Activated CD8-positive, alpha-beta T cell treated with anti-CD3 and anti-CD28 coated beads, Interleukin-2, amount 10 ng/mL, durations not matched to agents 7 days and 5 days (primary cell): ENCODE measurements at regions of chr7 and their contacts with region 1.

Region 1: DNA sequence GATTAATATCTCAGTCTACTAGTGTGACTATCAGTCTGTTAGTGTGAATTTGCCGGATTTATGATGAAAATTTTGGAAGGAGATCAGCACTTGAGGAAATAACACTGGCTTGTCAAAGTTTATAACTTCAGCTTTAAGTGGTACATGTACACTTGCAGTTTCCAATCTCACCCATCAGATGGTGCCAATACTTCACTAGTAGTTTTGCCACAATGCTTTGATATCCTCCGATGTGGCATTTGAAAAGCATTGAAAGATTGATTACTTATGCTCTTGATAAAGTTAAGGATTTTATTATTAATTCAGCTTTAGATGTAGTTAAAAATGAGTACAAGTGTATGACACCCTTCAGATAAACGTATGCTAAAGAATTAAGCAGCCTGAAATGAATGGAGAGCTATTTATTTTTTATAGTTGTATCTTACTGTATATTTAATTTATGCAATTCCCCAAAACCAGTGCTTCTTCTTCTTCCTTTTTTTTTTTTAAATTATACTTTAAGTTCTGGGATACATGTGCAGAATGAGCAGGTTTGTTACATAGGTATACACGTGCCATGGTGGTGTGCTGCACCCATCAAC is 98.2 kb downstream of the ANLN start:
- DNase-seq: peak; percentile 68
- ATAC-seq: peak; percentile 70
- H3K4me3 Mint-ChIP-seq: no peak overlapping the region
- H3K27ac Mint-ChIP-seq: no peak overlapping the region
- H3K4me1 Mint-ChIP-seq: peaks cover 3% of the 10 kb centered on the region
- H3K27me3 Mint-ChIP-seq: peaks cover 8% of the 10 kb centered on the region

Region 2: GRCh38 chr7:36303202-36304098 is 184.4 kb before region 1 on chr7:
- CTCF ChIA-PET with region 1: no interaction called
- POLR2A ChIA-PET with region 1: no interaction called
- DNase-seq: no peak
- ATAC-seq: no peak
- H3K4me3 Mint-ChIP-seq: no peak overlapping the region
- H3K27ac Mint-ChIP-seq: no peak overlapping the region
- H3K4me1 Mint-ChIP-seq: no peaks in the 10 kb centered on the region
- H3K27me3 Mint-ChIP-seq: no peaks in the 10 kb centered on the region

Region 3: GRCh38 chr7:36430186-36430585 is 57.7 kb before region 1 on chr7:
- CTCF ChIA-PET with region 1: no interaction called
- POLR2A ChIA-PET with region 1: no interaction called
- DNase-seq: no peak
- ATAC-seq: no peak
- H3K4me3 Mint-ChIP-seq: no peak overlapping the region
- H3K27ac Mint-ChIP-seq: no peak overlapping the region
- H3K4me1 Mint-ChIP-seq: no peaks in the 10 kb centered on the region
- H3K27me3 Mint-ChIP-seq: no peaks in the 10 kb centered on the region

Region 4: GRCh38 chr7:36473454-36474282 is 14.2 kb before region 1 on chr7:
- CTCF ChIA-PET with region 1: interaction called, 12 read pairs
- POLR2A ChIA-PET with region 1: no interaction called
- DNase-seq: peak; percentile 56
- ATAC-seq: peak; percentile 38
- H3K4me3 Mint-ChIP-seq: no peak overlapping the region
- H3K27ac Mint-ChIP-seq: peak overlapping the region; percentile 50
- H3K4me1 Mint-ChIP-seq: peaks cover 27% of the 10 kb centered on the region
- H3K27me3 Mint-ChIP-seq: no peaks in the 10 kb centered on the region

Region 5: DNA sequence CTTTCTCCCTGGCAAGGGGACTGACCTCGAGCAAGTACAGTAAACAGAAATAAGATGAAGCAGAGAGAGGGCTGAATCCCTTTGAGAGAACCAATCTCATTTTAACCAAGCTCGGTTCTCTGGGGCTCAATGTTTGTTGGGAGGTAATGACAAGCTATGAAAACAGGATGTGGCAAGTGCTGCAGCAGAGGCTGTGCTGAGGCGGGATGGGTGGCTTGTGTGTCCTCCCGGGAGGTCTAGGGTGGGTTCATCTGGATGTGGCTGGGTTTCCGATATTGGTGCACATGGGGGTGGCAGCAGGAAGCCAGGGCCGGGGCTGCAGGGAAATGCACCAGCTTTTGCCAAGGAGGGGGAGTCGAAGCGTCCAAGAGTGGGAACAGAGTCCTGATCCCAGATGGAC is 152.0 kb after region 1 on chr7:
- CTCF ChIA-PET with region 1: interaction called, 11 read pairs
- POLR2A ChIA-PET with region 1: no interaction called
- DNase-seq: peak; percentile 85
- ATAC-seq: peak; percentile 91
- H3K4me3 Mint-ChIP-seq: peak overlapping the region; percentile 66
- H3K27ac Mint-ChIP-seq: peak overlapping the region; percentile 97
- H3K4me1 Mint-ChIP-seq: peaks cover 70% of the 10 kb centered on the region
- H3K27me3 Mint-ChIP-seq: no peaks in the 10 kb centered on the region

Region 6: DNA sequence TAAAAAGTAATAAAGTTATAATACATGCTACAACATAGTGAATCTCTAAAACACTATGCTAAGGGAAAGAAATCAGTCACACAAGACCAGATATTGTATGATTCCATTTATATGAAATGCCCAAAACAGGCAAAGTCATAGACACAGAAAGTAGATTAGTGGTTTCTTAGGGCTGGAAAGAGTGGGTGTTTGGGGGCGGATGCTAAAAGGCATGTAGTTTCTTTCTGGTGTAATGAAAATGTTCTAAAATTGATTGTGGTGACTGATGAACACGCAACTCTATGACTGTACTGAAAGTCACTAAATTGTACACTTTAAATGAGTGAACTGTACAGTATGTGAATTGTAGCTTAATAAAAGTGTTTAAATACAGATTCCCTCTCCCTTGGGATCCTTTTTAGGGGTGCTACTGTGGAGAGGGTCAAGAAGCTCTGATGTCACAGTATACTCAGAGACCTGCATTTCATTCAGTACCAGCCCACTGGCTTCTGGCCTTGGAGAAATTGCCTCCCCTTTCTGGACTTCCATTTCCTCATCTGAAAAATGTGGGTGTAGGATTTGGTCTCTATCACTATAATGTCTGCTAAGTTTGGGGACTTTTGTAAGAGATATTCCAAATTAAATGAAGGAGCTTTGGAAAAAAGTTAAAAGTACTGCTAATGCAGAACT is 190.1 kb after region 1 on chr7:
- CTCF ChIA-PET with region 1: interaction called, 15 read pairs
- POLR2A ChIA-PET with region 1: no interaction called
- DNase-seq: peak; percentile 45
- ATAC-seq: peak; percentile 52
- H3K4me3 Mint-ChIP-seq: peak overlapping the region; percentile 51
- H3K27ac Mint-ChIP-seq: peak overlapping the region; percentile 89
- H3K4me1 Mint-ChIP-seq: peaks cover 53% of the 10 kb centered on the region
- H3K27me3 Mint-ChIP-seq: no peaks in the 10 kb centered on the region

Region 7: DNA sequence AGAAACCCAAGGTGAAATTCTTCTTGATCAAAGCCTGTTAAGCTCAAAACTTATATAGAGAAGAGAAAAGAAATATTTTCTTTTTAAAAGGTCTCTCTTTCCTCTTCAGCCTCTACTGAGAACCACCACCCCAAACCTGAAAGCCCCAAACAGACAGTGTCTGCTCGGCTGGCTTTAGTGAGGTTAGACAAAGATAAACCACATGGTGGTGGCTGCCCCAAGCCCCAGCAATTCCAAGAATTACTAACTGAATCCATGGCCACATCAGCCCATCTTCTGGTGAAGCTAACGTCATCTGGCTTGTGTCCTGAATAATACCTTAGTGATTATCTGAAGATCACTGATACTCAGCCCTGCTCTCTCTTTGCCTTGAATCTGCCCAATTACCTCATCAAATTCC is 685.8 kb after region 1 on chr7:
- CTCF ChIA-PET with region 1: interaction called, 14 read pairs
- POLR2A ChIA-PET with region 1: no interaction called
- DNase-seq: peak; percentile 39
- ATAC-seq: peak; percentile 72
- H3K4me3 Mint-ChIP-seq: no peak overlapping the region
- H3K27ac Mint-ChIP-seq: peak overlapping the region; percentile 72
- H3K4me1 Mint-ChIP-seq: peaks cover 49% of the 10 kb centered on the region
- H3K27me3 Mint-ChIP-seq: no peaks in the 10 kb centered on the region